ENCODE measurements at regions of chr13 and their contacts with region 1.

Region 1: DNA sequence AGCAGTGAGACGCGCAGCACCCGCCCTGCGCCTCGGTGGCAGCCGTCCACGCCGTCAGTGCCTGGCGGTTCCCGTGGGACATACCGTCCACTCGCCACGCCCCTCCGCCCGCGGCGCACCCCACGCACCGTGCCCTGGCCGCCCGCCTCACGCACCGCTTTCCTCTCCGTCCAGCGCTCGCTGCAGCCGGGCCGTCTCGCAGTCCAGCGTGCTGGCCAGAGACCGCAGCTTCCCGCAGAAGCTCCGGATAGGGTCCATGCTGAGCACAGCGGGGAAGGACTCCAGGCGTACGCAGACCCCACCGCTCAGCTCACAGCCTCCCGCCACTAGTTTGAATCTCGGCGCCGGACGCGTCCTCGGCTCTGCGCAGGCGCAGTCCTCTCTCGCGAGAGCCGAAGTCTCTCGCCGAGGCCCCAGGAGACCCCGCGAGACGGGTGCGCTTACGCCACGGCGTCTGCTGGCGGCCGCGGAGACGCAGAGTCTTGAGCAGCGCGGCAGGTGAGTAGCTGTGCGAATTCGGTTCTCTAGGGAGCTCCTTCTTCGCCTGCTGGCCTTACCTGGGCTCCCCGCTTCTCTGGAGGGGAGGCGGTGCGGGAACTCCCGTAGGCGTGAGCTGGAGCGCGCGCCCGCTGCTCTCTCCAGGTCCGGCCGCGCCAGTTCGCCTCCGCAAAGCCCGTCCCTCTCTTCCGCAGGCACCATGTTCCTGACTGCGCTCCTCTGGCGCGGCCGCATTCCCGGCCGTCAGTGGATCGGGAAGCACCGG is at the starts of genes MRPL57 and SKA3:
- DNase-seq: peak; percentile 90 to 97 (median 94)
- ATAC-seq: peak; percentile 97
- H3K4me3 ChIP-seq: peak within 1 kb of the TSS; percentile 86
- H3K4me3 Mint-ChIP-seq: peak within 1 kb of the TSS; percentile 95 to 99 (median 97)
- H3K27ac ChIP-seq: peak within 1 kb of the TSS; percentile 95
- H3K27ac Mint-ChIP-seq: peak within 1 kb of the TSS; percentile 80 to 97 (median 95)
- H3K4me1 ChIP-seq: peaks cover 10 to 16% of the 10 kb centered on the region in 2 donors
- H3K4me1 Mint-ChIP-seq: peaks cover 13 to 31% (median 22%) of the 10 kb centered on the region in 7 donors
- H3K27me3 ChIP-seq: no peaks in the 10 kb centered on the region
- H3K27me3 Mint-ChIP-seq: no peaks in the 10 kb centered on the region
- total RNA-seq, gene MRPL57: 10.6 to 22.8 (median 19.8) TPM
- total RNA-seq, gene SKA3: 0.46 to 35.0 (median 1.6) TPM in 4 of 5 experiments, not detected in the other

Region 2: DNA sequence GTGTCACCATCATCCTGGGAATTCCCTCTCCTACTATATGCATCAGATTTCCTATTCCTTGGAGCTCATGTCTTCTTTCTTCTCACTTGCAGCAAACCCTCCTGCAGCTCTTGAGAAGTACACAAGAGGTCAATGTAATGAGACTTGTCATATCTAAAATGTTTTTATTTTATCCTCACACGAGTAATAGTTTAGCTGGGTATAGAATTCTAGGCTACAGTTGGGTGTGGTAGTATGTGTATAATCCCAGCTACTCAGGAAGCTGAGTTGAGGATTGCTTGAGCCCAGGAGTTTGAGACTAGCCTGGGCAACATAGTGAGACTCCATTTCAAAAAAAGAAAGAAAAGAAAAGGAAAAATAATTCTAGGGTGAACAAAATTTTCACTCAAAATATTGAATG is 427.0 kb before region 1 on chr13:
- CTCF ChIA-PET with region 1: no interaction called
- POLR2A ChIA-PET with region 1: no interaction called
- intact Hi-C with region 1: no loop called
- DNase-seq: no peak
- ATAC-seq: no peak
- H3K4me3 ChIP-seq: no peak overlapping the region
- H3K4me3 Mint-ChIP-seq: no peak overlapping the region
- H3K27ac ChIP-seq: no peak overlapping the region
- H3K27ac Mint-ChIP-seq: no peak overlapping the region
- H3K4me1 ChIP-seq: no peaks in the 10 kb centered on the region
- H3K4me1 Mint-ChIP-seq: no peaks in the 10 kb centered on the region
- H3K27me3 ChIP-seq: no peaks in the 10 kb centered on the region
- H3K27me3 Mint-ChIP-seq: no peaks in the 10 kb centered on the region

Region 3: GRCh38 chr13:20828539-20829364 is 347.6 kb before region 1 on chr13:
- CTCF ChIA-PET with region 1: no interaction called
- POLR2A ChIA-PET with region 1: no interaction called
- intact Hi-C with region 1: no loop called
- DNase-seq: peak in 7 of 9 donors; percentile 46 to 75 (median 67)
- ATAC-seq: peak; percentile 93
- H3K4me3 ChIP-seq: no peak overlapping the region
- H3K4me3 Mint-ChIP-seq: peak overlapping the region in 8 of 10 donors; percentile 51 to 81 (median 73)
- H3K27ac ChIP-seq: peak overlapping the region; percentile 14
- H3K27ac Mint-ChIP-seq: peak overlapping the region; percentile 35 to 87 (median 77)
- H3K4me1 ChIP-seq: no peaks in the 10 kb centered on the region
- H3K4me1 Mint-ChIP-seq: peaks cover 7 to 15% (median 10%) of the 10 kb centered on the region in 7 donors
- H3K27me3 ChIP-seq: no peaks in the 10 kb centered on the region
- H3K27me3 Mint-ChIP-seq: no peaks in the 10 kb centered on the region

Region 4: DNA sequence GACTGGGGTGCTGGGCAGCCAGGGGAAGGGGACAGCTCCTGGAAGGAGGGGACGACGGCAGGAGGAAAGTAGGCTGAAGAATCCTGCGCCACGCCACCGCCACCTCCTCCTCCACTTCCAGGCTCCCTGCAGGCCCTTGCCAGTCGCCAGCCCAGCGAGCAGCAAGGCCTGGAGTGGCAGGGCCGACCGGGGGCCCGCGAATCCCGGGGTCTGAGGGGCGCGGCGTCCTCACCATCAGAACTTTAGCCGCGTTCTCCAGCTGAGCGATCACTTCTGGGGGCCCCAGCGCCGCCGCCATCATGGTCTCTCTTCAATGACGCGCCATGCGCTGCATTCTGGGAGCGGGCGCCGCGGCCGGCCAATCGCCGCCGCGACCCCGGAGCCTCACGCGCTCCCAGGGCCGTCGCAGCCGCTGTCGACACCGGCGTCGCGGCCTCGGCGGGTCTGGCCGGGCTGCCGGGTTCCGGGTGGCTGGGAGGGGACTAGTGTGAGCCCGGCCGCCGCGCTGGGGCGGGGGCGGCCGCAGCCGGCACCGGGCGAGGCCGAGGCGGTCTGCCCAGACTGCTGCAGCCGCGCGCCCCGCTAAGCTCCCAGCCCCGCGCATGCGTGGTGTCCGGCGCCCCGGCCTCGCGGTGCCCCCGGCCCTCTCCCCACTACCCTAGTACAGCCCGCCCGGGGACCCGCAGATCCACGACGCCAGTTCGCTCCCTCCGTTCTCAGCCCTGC is 273.8 kb before region 1 on chr13 and contains the start of gene XPO4:
- CTCF ChIA-PET with region 1: interaction called, 8 read pairs
- POLR2A ChIA-PET with region 1: no interaction called
- intact Hi-C with region 1: loop called in 1 of 2 experiments (anchors 2 kb)
- DNase-seq: peak; percentile 68 to 85 (median 77)
- ATAC-seq: peak; percentile 97
- H3K4me3 ChIP-seq: peak within 1 kb of the TSS; percentile 98
- H3K4me3 Mint-ChIP-seq: peak within 1 kb of the TSS; percentile 93 to 98 (median 96)
- H3K27ac ChIP-seq: peak within 1 kb of the TSS; percentile 83
- H3K27ac Mint-ChIP-seq: peak within 1 kb of the TSS; percentile 89 to 98 (median 95)
- H3K4me1 ChIP-seq: peaks cover 10 to 21% of the 10 kb centered on the region in 2 donors
- H3K4me1 Mint-ChIP-seq: peaks cover 15 to 41% (median 32%) of the 10 kb centered on the region in 7 donors
- H3K27me3 ChIP-seq: no peaks in the 10 kb centered on the region
- H3K27me3 Mint-ChIP-seq: peaks cover 0 to 3% (median 0%) of the 10 kb centered on the region in 5 donors
- total RNA-seq, gene XPO4: 20.9 to 26.5 (median 23.5) TPM

Region 5: DNA sequence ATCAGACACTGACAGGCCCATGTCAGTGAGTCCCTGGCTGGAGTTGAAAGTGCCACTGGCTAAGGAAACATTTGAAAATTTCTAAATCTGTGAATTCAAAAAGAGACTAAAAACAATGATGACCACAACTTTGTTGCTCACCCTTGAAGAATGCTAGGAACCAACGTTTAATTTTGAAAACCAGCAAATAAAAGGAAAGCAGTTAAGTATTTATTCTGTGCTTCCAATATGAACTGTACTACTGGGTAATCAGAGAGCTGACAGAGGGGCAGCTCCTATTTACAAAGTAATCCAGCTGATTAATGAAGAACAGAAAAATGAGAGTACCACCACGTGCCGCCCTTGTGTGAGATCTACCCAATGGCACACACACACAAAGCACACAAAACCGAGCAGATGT is 70.3 kb before region 1 on chr13:
- CTCF ChIA-PET with region 1: interaction called, 7 read pairs
- POLR2A ChIA-PET with region 1: no interaction called
- intact Hi-C with region 1: loop called (anchors 1 to 2 kb)
- DNase-seq: no peak
- ATAC-seq: no peak
- H3K4me3 ChIP-seq: no peak overlapping the region
- H3K4me3 Mint-ChIP-seq: no peak overlapping the region
- H3K27ac ChIP-seq: no peak overlapping the region
- H3K27ac Mint-ChIP-seq: no peak overlapping the region
- H3K4me1 ChIP-seq: no peaks in the 10 kb centered on the region
- H3K4me1 Mint-ChIP-seq: peaks cover 0 to 2% (median 0%) of the 10 kb centered on the region in 7 donors
- H3K27me3 ChIP-seq: no peaks in the 10 kb centered on the region
- H3K27me3 Mint-ChIP-seq: peaks cover 0 to 5% (median 0%) of the 10 kb centered on the region in 5 donors

Region 6: GRCh38 chr13:21149568-21149967 is 26.8 kb before region 1 on chr13:
- CTCF ChIA-PET with region 1: no interaction called
- POLR2A ChIA-PET with region 1: interaction called, 10 read pairs
- intact Hi-C with region 1: no loop called
- DNase-seq: no peak
- ATAC-seq: no peak
- H3K4me3 ChIP-seq: no peak overlapping the region
- H3K4me3 Mint-ChIP-seq: no peak overlapping the region
- H3K27ac ChIP-seq: no peak overlapping the region
- H3K27ac Mint-ChIP-seq: peak overlapping the region in 1 of 9 donors; percentile 34
- H3K4me1 ChIP-seq: peaks cover 0 to 1% of the 10 kb centered on the region in 2 donors
- H3K4me1 Mint-ChIP-seq: peaks cover 0 to 6% (median 5%) of the 10 kb centered on the region in 7 donors
- H3K27me3 ChIP-seq: no peaks in the 10 kb centered on the region
- H3K27me3 Mint-ChIP-seq: no peaks in the 10 kb centered on the region

Region 7: DNA sequence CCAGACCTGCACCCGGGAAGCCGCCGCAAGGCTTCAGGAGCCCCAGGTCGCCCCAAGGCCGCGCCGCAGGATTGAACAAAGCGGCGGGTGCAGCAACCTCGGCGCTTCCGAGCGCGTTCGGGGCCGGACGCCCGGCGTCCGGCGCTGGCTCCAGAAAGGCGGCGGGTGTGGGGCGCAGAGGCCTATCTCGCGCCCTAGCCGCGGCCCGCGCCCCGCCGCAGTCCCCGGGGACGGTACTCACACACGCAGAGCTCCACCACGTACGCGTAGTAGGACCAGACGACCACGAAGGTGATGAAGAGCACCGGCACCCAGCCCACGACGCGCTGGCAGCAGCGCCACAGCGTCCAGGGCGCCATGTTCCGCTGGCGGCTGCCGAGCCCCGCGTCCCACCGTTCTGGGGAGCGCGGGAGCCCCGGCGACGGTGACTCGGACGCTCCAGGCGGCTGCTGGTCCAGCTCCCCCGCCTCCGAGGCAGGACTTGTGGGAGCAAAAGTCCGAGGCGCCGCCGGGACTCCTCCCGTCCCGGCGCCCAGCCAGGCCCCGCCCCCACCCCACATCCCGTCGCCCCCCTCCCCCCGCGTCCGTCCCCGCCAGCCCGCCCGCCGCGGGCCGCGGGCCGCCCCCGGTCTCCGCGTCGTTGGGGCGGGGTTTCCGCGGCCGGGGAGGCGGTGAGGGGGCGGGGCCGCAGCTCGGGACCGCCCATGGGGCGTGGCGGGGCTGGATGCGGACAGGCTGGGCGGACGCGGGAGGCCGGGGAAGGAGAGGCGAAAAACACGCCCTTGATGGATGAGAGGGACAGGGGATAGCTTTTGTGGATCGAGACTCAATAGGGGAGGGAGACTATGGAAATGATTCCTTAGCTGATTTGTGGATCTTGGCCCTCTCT is 282.7 kb after region 1 on chr13 and contains the start of gene ZDHHC20:
- CTCF ChIA-PET with region 1: no interaction called
- POLR2A ChIA-PET with region 1: interaction called, 13 read pairs
- intact Hi-C with region 1: loop called (anchors 1 kb)
- DNase-seq: peak; percentile 75 to 99 (median 88)
- ATAC-seq: peak; percentile 98
- H3K4me3 ChIP-seq: peak within 1 kb of the TSS; percentile 90
- H3K4me3 Mint-ChIP-seq: peak within 1 kb of the TSS; percentile 91 to 97 (median 94)
- H3K27ac ChIP-seq: peak within 1 kb of the TSS; percentile 97
- H3K27ac Mint-ChIP-seq: peak within 1 kb of the TSS; percentile 74 to 98 (median 94)
- H3K4me1 ChIP-seq: peaks cover 9 to 19% of the 10 kb centered on the region in 2 donors
- H3K4me1 Mint-ChIP-seq: peaks cover 27 to 55% (median 42%) of the 10 kb centered on the region in 7 donors
- H3K27me3 ChIP-seq: no peaks in the 10 kb centered on the region
- H3K27me3 Mint-ChIP-seq: peaks cover 0 to 7% (median 0%) of the 10 kb centered on the region in 5 donors
- total RNA-seq, gene ZDHHC20: 60.8 to 89.9 (median 71.7) TPM

Region 8: DNA sequence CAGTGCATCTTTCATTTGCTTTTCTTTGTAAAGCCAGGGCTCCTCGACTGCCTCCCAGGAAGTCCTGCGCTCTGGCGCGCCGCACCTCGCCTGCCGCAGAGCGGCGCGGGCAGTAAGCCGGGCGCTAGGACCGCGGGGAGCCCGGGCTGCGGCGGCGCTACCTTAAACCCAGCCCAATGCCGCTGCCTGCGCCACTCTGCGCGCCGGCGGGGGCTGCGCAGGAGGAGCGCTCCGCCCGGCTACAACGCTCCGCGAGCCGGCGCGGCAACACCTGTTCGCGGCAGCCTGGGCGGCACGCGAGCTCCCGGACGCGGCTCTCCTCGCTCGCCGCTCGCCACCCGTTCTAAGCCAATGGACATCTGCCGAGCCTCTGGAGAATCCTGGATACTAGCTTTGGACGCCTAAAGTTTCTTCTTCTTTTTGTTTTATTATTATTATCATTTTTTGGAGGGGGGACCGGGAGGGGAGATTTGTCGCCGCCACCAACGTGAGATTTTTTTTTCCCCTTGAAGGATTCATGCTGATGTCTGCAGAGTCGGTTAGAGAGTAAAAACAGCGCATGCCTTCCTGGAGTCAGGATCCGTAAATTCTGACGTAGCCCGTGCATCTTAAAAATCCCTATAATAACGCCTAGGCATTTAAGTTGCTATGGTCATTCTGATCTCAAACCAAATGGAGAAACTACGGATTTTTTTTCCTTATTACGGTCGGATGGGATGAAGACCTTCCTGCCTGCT is 494.6 kb after region 1 on chr13 and contains the start of gene FGF9:
- CTCF ChIA-PET with region 1: no interaction called
- POLR2A ChIA-PET with region 1: no interaction called
- intact Hi-C with region 1: loop called (anchors 1 to 2 kb)
- DNase-seq: peak; percentile 76 to 88 (median 86)
- ATAC-seq: peak; percentile 89
- H3K4me3 ChIP-seq: peak within 1 kb of the TSS; percentile 92
- H3K4me3 Mint-ChIP-seq: peak within 1 kb of the TSS; percentile 88 to 98 (median 93)
- H3K27ac ChIP-seq: peak within 1 kb of the TSS; percentile 48
- H3K27ac Mint-ChIP-seq: peak within 1 kb of the TSS; percentile 61 to 94 (median 78)
- H3K4me1 ChIP-seq: peaks cover 19 to 32% of the 10 kb centered on the region in 2 donors
- H3K4me1 Mint-ChIP-seq: peaks cover 27 to 45% (median 44%) of the 10 kb centered on the region in 7 donors
- H3K27me3 ChIP-seq: peaks cover 0 to 4% of the 10 kb centered on the region in 2 donors
- H3K27me3 Mint-ChIP-seq: peaks cover 5 to 77% (median 20%) of the 10 kb centered on the region in 5 donors
- total RNA-seq, gene FGF9: 0.19 to 5.6 (median 2.0) TPM

Region 9: DNA sequence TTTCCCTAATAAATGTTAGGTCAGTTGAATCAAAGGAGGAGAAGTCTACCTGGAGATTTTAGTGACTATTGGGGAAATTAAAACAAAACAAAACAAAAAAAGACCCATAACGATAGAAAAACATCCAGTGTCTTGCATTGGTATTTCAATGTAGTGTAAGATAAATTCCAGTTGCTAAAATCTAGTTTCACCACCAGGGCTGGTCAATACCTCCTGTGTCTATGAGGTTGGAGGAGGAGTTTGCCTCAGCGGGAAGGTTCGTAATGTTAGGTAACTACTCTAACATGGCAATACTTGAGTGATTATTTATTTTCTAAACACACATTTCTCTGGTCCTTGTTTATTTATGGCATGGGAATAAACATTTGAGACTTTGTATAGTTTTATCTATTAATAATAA is 977.6 kb after region 1 on chr13:
- CTCF ChIA-PET with region 1: no interaction called
- POLR2A ChIA-PET with region 1: no interaction called
- intact Hi-C with region 1: no loop called
- DNase-seq: no peak
- ATAC-seq: no peak
- H3K4me3 ChIP-seq: no peak overlapping the region
- H3K4me3 Mint-ChIP-seq: no peak overlapping the region
- H3K27ac ChIP-seq: no peak overlapping the region
- H3K27ac Mint-ChIP-seq: no peak overlapping the region
- H3K4me1 ChIP-seq: no peaks in the 10 kb centered on the region
- H3K4me1 Mint-ChIP-seq: no peaks in the 10 kb centered on the region
- H3K27me3 ChIP-seq: no peaks in the 10 kb centered on the region
- H3K27me3 Mint-ChIP-seq: peaks cover 0 to 4% (median 4%) of the 10 kb centered on the region in 5 donors